B cell (primary cell): ENCODE measurements at regions of chr14 and their contacts with region 1.

Region 1: GRCh38 chr14:68843471-68844209 is 50.8 kb upstream of the ZFP36L1 start:
- DNase-seq: peak; percentile 80
- ATAC-seq: peak; percentile 82
- H3K4me3 ChIP-seq: peak overlapping the region in 3 of 5 experiments; percentile 18 to 50 (median 24)
- H3K4me3 Mint-ChIP-seq: peak overlapping the region; percentile 62
- H3K27ac ChIP-seq: no peak overlapping the region
- H3K27ac Mint-ChIP-seq: no peak overlapping the region
- H3K4me1 ChIP-seq: peaks cover 6 to 7% of the 10 kb centered on the region in 2 donors
- H3K4me1 Mint-ChIP-seq: peaks cover 14% of the 10 kb centered on the region
- H3K27me3 ChIP-seq: no peaks in the 10 kb centered on the region
- H3K27me3 Mint-ChIP-seq: peaks cover 6% of the 10 kb centered on the region
- CTCF ChIP-seq: peak; percentile 93

Region 2: GRCh38 chr14:67837011-67837624 is 1006.5 kb before region 1 on chr14:
- CTCF ChIA-PET with region 1: interaction called, 8 read pairs
- POLR2A ChIA-PET with region 1: no interaction called
- intact Hi-C with region 1: loop called (anchors 2 kb)
- DNase-seq: peak; percentile 83
- ATAC-seq: peak; percentile 64
- H3K4me3 ChIP-seq: no peak overlapping the region
- H3K4me3 Mint-ChIP-seq: no peak overlapping the region
- H3K27ac ChIP-seq: no peak overlapping the region
- H3K27ac Mint-ChIP-seq: no peak overlapping the region
- H3K4me1 ChIP-seq: no peaks in the 10 kb centered on the region
- H3K4me1 Mint-ChIP-seq: no peaks in the 10 kb centered on the region
- H3K27me3 ChIP-seq: no peaks in the 10 kb centered on the region
- H3K27me3 Mint-ChIP-seq: no peaks in the 10 kb centered on the region
- CTCF ChIP-seq: peak; percentile 72

Region 3: GRCh38 chr14:67883717-67884116 is 959.9 kb before region 1 on chr14:
- CTCF ChIA-PET with region 1: interaction called, 9 read pairs
- POLR2A ChIA-PET with region 1: no interaction called
- intact Hi-C with region 1: loop called (anchors 5 kb)
- DNase-seq: peak; percentile 10
- ATAC-seq: no peak
- H3K4me3 ChIP-seq: no peak overlapping the region
- H3K4me3 Mint-ChIP-seq: no peak overlapping the region
- H3K27ac ChIP-seq: no peak overlapping the region
- H3K27ac Mint-ChIP-seq: no peak overlapping the region
- H3K4me1 ChIP-seq: peaks cover 0 to 3% of the 10 kb centered on the region in 2 donors
- H3K4me1 Mint-ChIP-seq: peaks cover 6% of the 10 kb centered on the region
- H3K27me3 ChIP-seq: no peaks in the 10 kb centered on the region
- H3K27me3 Mint-ChIP-seq: no peaks in the 10 kb centered on the region
- CTCF ChIP-seq: peak; percentile 33

Region 4: DNA sequence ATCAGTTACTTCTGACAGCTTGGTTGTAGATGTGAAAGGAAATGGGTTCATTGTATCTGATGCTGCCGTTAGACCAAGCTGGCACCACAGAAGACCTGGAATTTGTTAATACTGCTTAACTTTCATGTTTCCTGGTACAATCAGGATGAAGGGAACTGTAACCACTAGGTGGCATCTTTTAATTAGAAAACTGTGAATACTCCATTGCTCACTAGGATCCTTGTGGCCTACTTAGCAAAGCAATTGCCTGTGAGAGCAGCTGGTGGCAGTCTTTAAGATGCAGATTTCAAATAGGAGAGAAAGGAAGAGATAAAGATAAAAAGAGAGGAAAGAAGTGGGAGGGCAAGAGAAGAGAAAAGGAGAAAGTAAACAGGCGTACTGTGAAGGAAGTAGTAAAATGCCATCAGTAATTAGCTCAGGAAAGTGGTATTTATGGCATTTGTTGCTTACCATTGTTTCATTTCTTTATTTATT is 909.6 kb before region 1 on chr14:
- CTCF ChIA-PET with region 1: interaction called, 80 read pairs
- POLR2A ChIA-PET with region 1: interaction called, 9 read pairs
- intact Hi-C with region 1: no loop called
- DNase-seq: peak; percentile 63
- ATAC-seq: peak; percentile 65
- H3K4me3 ChIP-seq: no peak overlapping the region
- H3K4me3 Mint-ChIP-seq: no peak overlapping the region
- H3K27ac ChIP-seq: no peak overlapping the region
- H3K27ac Mint-ChIP-seq: no peak overlapping the region
- H3K4me1 ChIP-seq: no peaks in the 10 kb centered on the region
- H3K4me1 Mint-ChIP-seq: peaks cover 2% of the 10 kb centered on the region
- H3K27me3 ChIP-seq: no peaks in the 10 kb centered on the region
- H3K27me3 Mint-ChIP-seq: no peaks in the 10 kb centered on the region
- CTCF ChIP-seq: peak; percentile 77

Region 5: DNA sequence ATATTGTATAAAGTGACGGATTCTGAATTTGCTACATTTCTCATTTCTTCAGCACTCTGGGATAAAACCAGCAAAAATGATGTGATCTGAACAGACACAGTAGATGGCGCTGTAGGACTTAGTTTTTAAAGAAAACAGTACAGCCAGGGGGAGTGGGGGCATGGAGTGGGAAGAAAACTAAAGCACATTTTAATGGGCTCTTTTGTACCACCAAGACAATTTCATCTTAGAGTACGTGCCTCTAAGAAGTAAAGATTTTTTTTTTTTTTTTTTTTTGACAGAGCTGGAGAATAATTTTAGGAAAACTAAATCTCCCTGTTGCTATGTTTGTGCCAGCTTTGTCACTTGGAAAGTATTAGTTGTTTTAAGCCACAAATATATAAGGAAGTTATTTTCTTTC is 899.7 kb before region 1 on chr14:
- CTCF ChIA-PET with region 1: interaction called, 91 read pairs
- POLR2A ChIA-PET with region 1: interaction called, 3 read pairs
- intact Hi-C with region 1: loop called (anchors 1 kb)
- DNase-seq: peak; percentile 77
- ATAC-seq: peak; percentile 60
- H3K4me3 ChIP-seq: no peak overlapping the region
- H3K4me3 Mint-ChIP-seq: no peak overlapping the region
- H3K27ac ChIP-seq: no peak overlapping the region
- H3K27ac Mint-ChIP-seq: no peak overlapping the region
- H3K4me1 ChIP-seq: peaks cover 0 to 3% of the 10 kb centered on the region in 2 donors
- H3K4me1 Mint-ChIP-seq: peaks cover 5% of the 10 kb centered on the region
- H3K27me3 ChIP-seq: no peaks in the 10 kb centered on the region
- H3K27me3 Mint-ChIP-seq: no peaks in the 10 kb centered on the region
- CTCF ChIP-seq: peak; percentile 84

Region 6: GRCh38 chr14:68598621-68599447 is 244.8 kb before region 1 on chr14:
- CTCF ChIA-PET with region 1: no interaction called
- POLR2A ChIA-PET with region 1: no interaction called
- intact Hi-C with region 1: no loop called
- DNase-seq: no peak
- ATAC-seq: no peak
- H3K4me3 ChIP-seq: no peak overlapping the region
- H3K4me3 Mint-ChIP-seq: no peak overlapping the region
- H3K27ac ChIP-seq: no peak overlapping the region
- H3K27ac Mint-ChIP-seq: no peak overlapping the region
- H3K4me1 ChIP-seq: peaks cover 10 to 14% of the 10 kb centered on the region in 2 donors
- H3K4me1 Mint-ChIP-seq: peaks cover 15% of the 10 kb centered on the region
- H3K27me3 ChIP-seq: no peaks in the 10 kb centered on the region
- H3K27me3 Mint-ChIP-seq: no peaks in the 10 kb centered on the region
- CTCF ChIP-seq: no peak

Region 7: DNA sequence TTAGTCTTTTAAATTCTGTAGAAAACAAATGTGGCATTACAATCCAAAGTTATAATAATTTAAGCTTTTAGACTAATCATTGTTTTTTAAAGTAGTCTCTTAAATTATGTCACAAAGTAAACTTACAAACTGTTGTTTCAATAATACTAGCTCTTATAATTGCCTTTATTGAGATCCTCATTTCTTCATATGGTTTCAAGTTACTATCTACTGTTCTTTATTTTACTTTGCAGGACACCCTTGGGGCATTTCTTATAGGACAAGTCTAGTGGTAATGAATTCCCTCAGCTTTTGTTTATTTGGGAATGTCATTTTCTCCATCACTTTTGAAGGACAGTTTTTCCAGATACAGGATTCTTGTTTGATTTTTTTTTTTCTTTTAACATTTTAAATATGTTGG is 42.7 kb before region 1 on chr14:
- CTCF ChIA-PET with region 1: no interaction called
- POLR2A ChIA-PET with region 1: no interaction called
- intact Hi-C with region 1: no loop called
- DNase-seq: no peak
- ATAC-seq: no peak
- H3K4me3 ChIP-seq: no peak overlapping the region
- H3K4me3 Mint-ChIP-seq: no peak overlapping the region
- H3K27ac ChIP-seq: no peak overlapping the region
- H3K27ac Mint-ChIP-seq: no peak overlapping the region
- H3K4me1 ChIP-seq: peaks cover 46 to 47% of the 10 kb centered on the region in 2 donors
- H3K4me1 Mint-ChIP-seq: peaks cover 71% of the 10 kb centered on the region
- H3K27me3 ChIP-seq: no peaks in the 10 kb centered on the region
- H3K27me3 Mint-ChIP-seq: no peaks in the 10 kb centered on the region
- CTCF ChIP-seq: no peak

Region 8: DNA sequence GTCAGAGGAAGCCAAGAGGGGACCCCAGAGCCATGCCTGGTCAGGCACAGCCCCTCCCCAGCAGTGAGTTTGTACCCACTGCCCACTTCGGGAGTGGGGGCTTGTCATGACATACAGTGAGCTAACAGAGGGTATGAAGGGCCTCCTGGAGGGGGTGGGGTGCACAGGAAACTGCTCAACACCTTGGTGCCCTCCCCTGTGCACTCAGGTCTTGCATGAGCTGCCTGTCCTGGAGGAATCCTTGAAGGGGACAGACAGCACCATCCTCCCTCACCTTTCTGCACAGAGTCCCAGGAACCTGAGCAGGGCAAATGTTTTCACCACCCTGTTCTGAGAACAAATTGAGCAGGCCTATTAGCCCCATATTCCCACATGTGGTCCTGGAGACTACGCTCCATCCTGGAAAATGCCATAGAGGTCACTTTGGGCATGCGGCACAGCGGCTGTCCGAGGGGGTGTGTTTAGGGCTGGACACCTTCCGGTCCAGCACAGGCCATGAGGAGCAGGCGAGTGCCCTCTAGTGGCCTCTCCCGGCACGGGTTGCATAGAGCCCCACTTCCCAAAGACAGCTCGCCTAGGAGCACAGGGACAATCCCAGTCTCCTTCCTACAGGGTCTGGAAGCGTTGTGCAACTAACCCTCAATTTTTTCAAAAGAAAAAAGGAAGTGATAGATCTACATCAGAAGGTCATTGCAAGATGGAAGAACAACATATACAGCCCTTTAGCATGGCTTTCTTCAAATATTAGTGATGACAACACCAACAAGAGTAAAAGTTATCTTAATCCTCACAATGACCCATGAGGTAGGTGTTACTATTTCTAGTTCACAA is 18.9 kb before region 1 on chr14:
- CTCF ChIA-PET with region 1: interaction called, 72 read pairs
- POLR2A ChIA-PET with region 1: no interaction called
- intact Hi-C with region 1: no loop called
- DNase-seq: peak; percentile 44
- ATAC-seq: no peak
- H3K4me3 ChIP-seq: no peak overlapping the region
- H3K4me3 Mint-ChIP-seq: no peak overlapping the region
- H3K27ac ChIP-seq: no peak overlapping the region
- H3K27ac Mint-ChIP-seq: no peak overlapping the region
- H3K4me1 ChIP-seq: peaks cover 25 to 48% of the 10 kb centered on the region in 2 donors
- H3K4me1 Mint-ChIP-seq: peaks cover 46% of the 10 kb centered on the region
- H3K27me3 ChIP-seq: no peaks in the 10 kb centered on the region
- H3K27me3 Mint-ChIP-seq: no peaks in the 10 kb centered on the region
- CTCF ChIP-seq: peak; percentile 61

Region 9: DNA sequence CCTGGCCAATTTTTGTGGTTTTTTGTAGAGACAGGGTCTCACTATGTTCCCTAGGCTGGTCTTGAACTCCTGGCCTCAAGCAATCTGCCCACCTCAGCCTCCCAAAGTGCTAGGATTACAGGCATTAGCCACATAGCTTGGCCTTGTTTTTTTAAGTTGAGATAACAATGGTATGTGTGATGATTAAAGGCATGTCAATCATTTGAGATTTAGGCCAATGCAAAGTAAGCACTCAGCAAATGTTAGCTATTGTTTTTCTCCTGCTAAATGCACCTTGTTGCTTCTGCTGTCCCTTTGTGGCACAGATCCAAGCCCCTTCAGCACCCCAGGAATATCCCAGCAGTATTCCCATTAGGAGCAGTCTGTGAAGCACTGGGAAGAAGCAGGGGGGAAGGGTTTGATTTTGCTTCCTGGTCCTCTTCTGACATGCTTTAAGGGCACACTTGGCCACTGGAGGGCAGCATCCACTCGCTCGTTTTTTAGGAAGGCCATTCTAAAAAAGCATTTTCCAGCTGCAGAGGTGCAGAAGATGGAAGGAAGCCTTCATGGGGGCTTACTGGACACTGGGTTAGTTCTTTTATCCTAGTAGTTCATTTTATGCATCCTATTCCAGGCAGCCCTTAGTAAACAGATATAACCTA is 19.4 kb after region 1 on chr14:
- CTCF ChIA-PET with region 1: interaction called, 20 read pairs
- POLR2A ChIA-PET with region 1: no interaction called
- intact Hi-C with region 1: no loop called
- DNase-seq: peak; percentile 53
- ATAC-seq: peak; percentile 33
- H3K4me3 ChIP-seq: no peak overlapping the region
- H3K4me3 Mint-ChIP-seq: no peak overlapping the region
- H3K27ac ChIP-seq: no peak overlapping the region
- H3K27ac Mint-ChIP-seq: no peak overlapping the region
- H3K4me1 ChIP-seq: no peaks in the 10 kb centered on the region
- H3K4me1 Mint-ChIP-seq: no peaks in the 10 kb centered on the region
- H3K27me3 ChIP-seq: no peaks in the 10 kb centered on the region
- H3K27me3 Mint-ChIP-seq: no peaks in the 10 kb centered on the region
- CTCF ChIP-seq: peak; percentile 55